ENCODE measurements at regions of chrX and their contacts with region 1.

Region 1: DNA sequence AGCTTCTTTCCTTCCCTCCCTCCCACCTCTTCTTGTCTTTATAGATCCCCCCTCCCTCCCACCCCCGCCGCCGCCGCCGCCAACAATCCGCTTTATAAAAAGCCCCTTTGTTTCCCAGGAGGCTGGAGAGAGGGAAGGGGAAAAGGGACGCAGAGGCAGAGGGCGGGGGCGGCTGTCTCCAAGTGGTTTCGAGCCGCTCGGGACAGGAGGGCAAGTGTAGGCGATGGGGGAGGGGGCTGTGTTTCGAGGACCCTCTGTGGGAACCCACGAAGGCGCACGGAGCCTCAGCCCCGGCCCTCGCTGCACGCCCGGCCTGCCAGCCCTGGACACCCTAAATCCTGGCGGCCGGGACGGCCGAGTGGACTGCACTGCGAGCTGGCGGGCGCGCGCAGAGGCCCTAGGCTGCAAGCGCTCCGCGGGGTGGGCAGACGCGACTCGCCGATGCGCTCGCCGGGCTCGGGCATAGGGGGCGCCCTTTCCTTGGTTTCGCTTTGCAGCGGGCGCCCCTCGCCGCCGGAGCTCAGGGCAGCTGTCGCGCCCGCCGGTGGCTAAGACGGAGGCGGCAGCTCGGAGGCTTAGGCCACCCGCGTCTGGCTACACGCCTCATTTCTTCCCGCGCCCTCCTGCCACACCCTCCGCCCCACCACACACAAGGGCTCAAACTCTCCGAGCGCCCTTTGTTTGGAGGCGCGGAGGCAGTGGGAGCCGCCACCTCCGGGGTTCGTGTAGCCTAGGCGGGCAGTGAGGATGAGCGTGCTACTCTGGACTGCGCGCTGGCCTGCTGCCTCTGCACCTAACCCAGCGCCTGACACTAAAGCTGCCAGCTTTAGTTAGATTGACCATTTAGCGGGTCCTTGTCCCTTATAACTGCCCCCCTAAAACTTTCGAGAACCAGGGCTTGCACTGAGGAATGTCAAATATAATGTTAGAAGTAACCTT is 2.2 kb downstream of the MAMLD1 start:
- DNase-seq: peak; percentile 32 to 72 (median 64)
- H3K4me3 ChIP-seq: peak overlapping the region; percentile 39 to 80 (median 66)
- H3K27ac ChIP-seq: no peak overlapping the region
- H3K4me1 ChIP-seq: peaks cover 0 to 52% (median 44%) of the 10 kb centered on the region in 4 experiments
- H3K27me3 ChIP-seq: peaks cover 0 to 48% (median 2%) of the 10 kb centered on the region in 5 experiments

Region 2: GRCh38 chrX:150410513-150410912 is 45.2 kb after region 1 on chrX:
- CTCF ChIA-PET with region 1: no interaction called
- POLR2A ChIA-PET with region 1: no interaction called
- DNase-seq: peak in 2 of 3 donors; percentile 6 to 21
- H3K4me3 ChIP-seq: no peak overlapping the region
- H3K27ac ChIP-seq: no peak overlapping the region
- H3K4me1 ChIP-seq: no peaks in the 10 kb centered on the region
- H3K27me3 ChIP-seq: no peaks in the 10 kb centered on the region

Region 3: GRCh38 chrX:150486011-150486410 is 120.7 kb after region 1 on chrX:
- CTCF ChIA-PET with region 1: interaction called, 10 read pairs
- POLR2A ChIA-PET with region 1: no interaction called
- DNase-seq: peak; percentile 40 to 73 (median 65)
- H3K4me3 ChIP-seq: no peak overlapping the region
- H3K27ac ChIP-seq: no peak overlapping the region
- H3K4me1 ChIP-seq: peaks cover 0 to 6% (median 0%) of the 10 kb centered on the region in 4 experiments
- H3K27me3 ChIP-seq: no peaks in the 10 kb centered on the region